ENCODE measurements at regions of chr20 and their contacts with region 1.

Region 1: DNA sequence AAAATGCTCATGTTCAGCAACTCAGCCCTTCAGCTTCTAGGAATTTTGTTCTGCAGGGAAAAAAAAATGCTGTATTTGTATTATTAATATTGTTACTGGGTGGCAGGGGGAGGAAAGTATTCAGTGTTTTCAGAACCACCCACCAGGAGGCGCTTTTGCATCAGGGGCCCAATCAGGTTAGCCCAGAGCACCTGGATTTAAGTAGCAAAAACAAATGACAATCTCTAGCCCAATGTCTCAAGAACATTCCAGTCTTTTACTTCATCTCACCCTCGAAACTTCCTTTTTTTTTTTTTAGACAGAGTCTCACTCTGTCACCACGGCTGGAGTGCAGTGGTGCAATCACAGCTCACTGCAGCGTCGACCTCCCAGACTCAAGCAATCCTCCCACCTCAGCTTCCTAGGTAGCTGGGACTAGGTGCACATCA is 635 bp upstream of the C20orf203 start:
- H3K4me3 ChIP-seq: no peak overlapping the region
- H3K27ac ChIP-seq: no peak overlapping the region
- H3K4me1 ChIP-seq: no peaks in the 10 kb centered on the region
- CTCF ChIP-seq: peak; percentile 59; the same call in 1 of the 2 replicates

Region 2: GRCh38 chr20:32767418-32768198 is 93.2 kb after region 1 on chr20:
- CTCF ChIA-PET with region 1: interaction called, 15 read pairs
- POLR2A ChIA-PET with region 1: no interaction called
- H3K4me3 ChIP-seq: no peak overlapping the region
- H3K27ac ChIP-seq: no peak overlapping the region
- H3K4me1 ChIP-seq: no peaks in the 10 kb centered on the region; the same call in 1 of the 2 replicates
- CTCF ChIP-seq: no peak

Region 3: DNA sequence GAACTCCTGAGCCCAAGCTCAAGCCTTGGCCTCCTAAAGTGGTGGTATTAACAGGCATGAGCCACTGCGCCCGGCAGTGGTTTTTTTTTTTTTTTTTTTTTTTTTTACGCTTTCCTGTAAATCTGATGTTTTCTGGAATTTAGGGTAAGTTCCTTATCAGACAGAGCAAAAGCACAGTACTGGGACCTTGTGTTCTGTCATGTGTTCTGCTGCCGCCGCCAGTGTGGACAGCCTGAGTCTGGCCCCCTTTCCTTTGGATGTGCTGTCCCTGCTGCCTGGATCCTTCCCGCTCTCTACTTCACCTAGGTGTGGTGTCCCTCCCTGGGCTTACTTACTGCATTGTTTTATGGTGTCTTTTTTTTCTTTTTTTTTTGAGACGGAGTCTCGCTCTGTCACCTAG is 99.5 kb after region 1 on chr20:
- CTCF ChIA-PET with region 1: interaction called, 244 read pairs
- POLR2A ChIA-PET with region 1: interaction called, 13 read pairs
- H3K4me3 ChIP-seq: no peak overlapping the region
- H3K27ac ChIP-seq: no peak overlapping the region
- H3K4me1 ChIP-seq: peaks cover 3% of the 10 kb centered on the region; the same call in 1 of the 2 replicates
- CTCF ChIP-seq: no peak

Region 4: DNA sequence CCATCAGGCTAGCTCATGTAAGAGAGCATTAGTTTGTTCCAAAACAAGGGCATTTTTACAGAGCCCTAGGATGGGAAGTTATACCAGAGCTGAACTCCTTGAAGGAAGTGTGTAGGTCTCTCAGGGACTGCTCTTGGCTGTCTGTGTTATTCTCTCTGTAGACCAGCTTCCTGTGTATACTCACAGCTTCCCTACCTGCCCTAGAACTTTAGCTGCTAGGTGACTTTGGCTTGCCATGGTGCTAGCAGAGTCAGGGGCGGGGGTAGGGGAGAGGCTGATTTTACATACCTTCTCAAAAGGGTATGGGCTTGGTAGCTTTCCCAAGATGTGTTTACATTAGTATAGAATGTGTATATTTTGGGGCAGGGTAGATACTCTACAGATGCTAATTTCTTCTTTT is 162.8 kb after region 1 on chr20:
- CTCF ChIA-PET with region 1: no interaction called
- POLR2A ChIA-PET with region 1: no interaction called
- H3K4me3 ChIP-seq: no peak overlapping the region
- H3K27ac ChIP-seq: no peak overlapping the region
- H3K4me1 ChIP-seq: no peaks in the 10 kb centered on the region
- CTCF ChIP-seq: no peak

Measured in HEK293 (cell line).